Posterior vena cava (tissue), 2 donors: ENCODE measurements at regions of chrX and their contacts with region 1.

Region 1: GRCh38 chrX:2595258-2595657 is 94.5 kb upstream of the DHRSX start:
- DNase-seq: no peak

Region 2: DNA sequence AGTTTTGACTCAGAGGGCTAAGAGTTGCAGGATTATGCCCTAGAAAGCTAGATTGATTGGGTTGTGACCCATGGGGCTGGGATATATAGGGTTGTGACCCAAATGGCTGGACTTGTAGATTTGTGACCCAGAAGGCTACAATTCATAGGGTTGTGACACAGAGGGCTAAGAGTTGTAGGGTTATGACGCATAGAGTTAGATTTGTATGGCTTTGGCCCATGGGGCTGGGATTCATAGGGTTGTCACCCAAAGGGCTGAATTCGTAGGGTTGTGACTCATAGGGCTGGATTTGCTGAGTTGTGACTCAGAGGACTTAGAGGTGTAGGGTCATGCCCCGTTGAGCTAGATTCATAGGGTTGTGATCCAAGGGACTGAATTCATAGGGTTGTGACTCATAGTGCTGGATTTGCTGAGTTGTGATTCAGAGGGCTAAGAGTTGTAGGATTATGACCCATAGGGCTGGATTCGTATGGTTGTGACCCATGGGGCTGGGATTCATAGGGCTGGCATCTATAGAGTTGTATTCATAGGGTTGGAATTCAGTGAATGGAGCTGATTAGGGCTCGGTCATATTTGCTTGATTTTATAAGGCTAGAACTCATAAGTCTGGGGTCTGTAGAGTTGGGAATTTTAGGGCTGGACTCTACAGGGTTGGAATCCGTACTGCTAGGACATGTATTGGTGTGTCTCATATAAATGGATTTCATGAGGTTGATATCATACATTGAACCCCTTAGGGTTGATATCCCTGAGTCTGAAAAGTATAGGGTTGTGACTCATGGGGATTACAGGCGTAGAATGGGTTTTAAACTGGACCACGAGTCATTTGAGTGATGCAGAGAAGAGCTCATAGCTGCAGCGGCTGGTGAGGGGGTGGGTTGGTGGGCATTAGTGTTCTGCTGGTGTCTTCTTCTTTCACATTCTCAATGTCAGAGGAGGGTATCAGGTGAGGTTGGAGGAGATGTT is 1508.5 kb before region 1 on chrX:
- intact Hi-C with region 1: no loop called
- DNase-seq: peak; percentile 16

Region 3: GRCh38 chrX:1468250-1468772 is 1126.9 kb before region 1 on chrX:
- intact Hi-C with region 1: loop called in 1 of 2 experiments (anchors 10 kb)
- DNase-seq: peak; percentile 79

Region 4: GRCh38 chrX:1657367-1658070 is 937.7 kb before region 1 on chrX:
- intact Hi-C with region 1: loop called in 1 of 2 experiments (anchors 10 kb)
- DNase-seq: peak; percentile 74